B cell (primary cell): ENCODE measurements at regions of chr12 and their contacts with region 1.

Region 1: GRCh38 chr12:53670299-53670698 is 5.6 kb downstream of the ATP5MC2 start:
- DNase-seq: no peak
- ATAC-seq: no peak
- H3K4me3 ChIP-seq: no peak overlapping the region
- H3K4me3 Mint-ChIP-seq: no peak overlapping the region
- H3K27ac ChIP-seq: no peak overlapping the region
- H3K27ac Mint-ChIP-seq: no peak overlapping the region
- H3K4me1 ChIP-seq: peaks cover 5 to 10% of the 10 kb centered on the region in 2 donors
- H3K4me1 Mint-ChIP-seq: peaks cover 19% of the 10 kb centered on the region
- H3K27me3 ChIP-seq: no peaks in the 10 kb centered on the region
- H3K27me3 Mint-ChIP-seq: no peaks in the 10 kb centered on the region
- CTCF ChIP-seq: no peak

Region 2: GRCh38 chr12:53714004-53714403 is 43.7 kb after region 1 on chr12:
- CTCF ChIA-PET with region 1: no interaction called
- POLR2A ChIA-PET with region 1: no interaction called
- intact Hi-C with region 1: loop called (anchors 1 kb)
- DNase-seq: no peak
- ATAC-seq: no peak
- H3K4me3 ChIP-seq: no peak overlapping the region
- H3K4me3 Mint-ChIP-seq: no peak overlapping the region
- H3K27ac ChIP-seq: no peak overlapping the region
- H3K27ac Mint-ChIP-seq: no peak overlapping the region
- H3K4me1 ChIP-seq: peaks cover 0 to 5% of the 10 kb centered on the region in 2 donors
- H3K4me1 Mint-ChIP-seq: peaks cover 3% of the 10 kb centered on the region
- H3K27me3 ChIP-seq: no peaks in the 10 kb centered on the region
- H3K27me3 Mint-ChIP-seq: no peaks in the 10 kb centered on the region
- CTCF ChIP-seq: no peak